Activated naive CD4-positive, alpha-beta T cell treated with anti-CD3 and anti-CD28 coated beads for 36 hours (primary cell): ENCODE measurements at regions of chrX and their contacts with region 1.

Region 1: GRCh38 chrX:21658152-21658737 is at the start of gene KLHL34:
- DNase-seq: peak; percentile 26
- H3K4me3 Mint-ChIP-seq: peak within 1 kb of the TSS; percentile 67
- H3K27ac Mint-ChIP-seq: no peak within 1 kb of the TSS
- H3K4me1 Mint-ChIP-seq: peaks cover 11% of the 10 kb centered on the region
- H3K27me3 Mint-ChIP-seq: no peaks in the 10 kb centered on the region
- total RNA-seq, gene KLHL34: 1.1 to 1.2 TPM

Region 2: GRCh38 chrX:21438792-21439191 is 219.5 kb before region 1 on chrX:
- CTCF ChIA-PET with region 1: no interaction called
- intact Hi-C with region 1: loop called (anchors 1 kb)
- DNase-seq: no peak
- H3K4me3 Mint-ChIP-seq: peak overlapping the region; percentile 67
- H3K27ac Mint-ChIP-seq: peak overlapping the region; percentile 89
- H3K4me1 Mint-ChIP-seq: peaks cover 19% of the 10 kb centered on the region
- H3K27me3 Mint-ChIP-seq: no peaks in the 10 kb centered on the region

Region 3: GRCh38 chrX:21958916-21959315 is 300.7 kb after region 1 on chrX:
- CTCF ChIA-PET with region 1: no interaction called
- intact Hi-C with region 1: no loop called
- DNase-seq: no peak
- H3K4me3 Mint-ChIP-seq: no peak overlapping the region
- H3K27ac Mint-ChIP-seq: no peak overlapping the region
- H3K4me1 Mint-ChIP-seq: peaks cover 59% of the 10 kb centered on the region
- H3K27me3 Mint-ChIP-seq: no peaks in the 10 kb centered on the region